Activated naive CD4-positive, alpha-beta T cell treated with anti-CD3 and anti-CD28 coated beads for 36 hours (primary cell): ENCODE measurements at regions of chr2 and their contacts with region 1.

Region 1: GRCh38 chr2:95389245-95390119 is 13.0 kb upstream of the FAHD2A start:
- DNase-seq: peak; percentile 62
- H3K4me3 Mint-ChIP-seq: no peak overlapping the region
- H3K27ac Mint-ChIP-seq: no peak overlapping the region
- H3K4me1 Mint-ChIP-seq: no peaks in the 10 kb centered on the region
- H3K27me3 Mint-ChIP-seq: no peaks in the 10 kb centered on the region

Region 2: DNA sequence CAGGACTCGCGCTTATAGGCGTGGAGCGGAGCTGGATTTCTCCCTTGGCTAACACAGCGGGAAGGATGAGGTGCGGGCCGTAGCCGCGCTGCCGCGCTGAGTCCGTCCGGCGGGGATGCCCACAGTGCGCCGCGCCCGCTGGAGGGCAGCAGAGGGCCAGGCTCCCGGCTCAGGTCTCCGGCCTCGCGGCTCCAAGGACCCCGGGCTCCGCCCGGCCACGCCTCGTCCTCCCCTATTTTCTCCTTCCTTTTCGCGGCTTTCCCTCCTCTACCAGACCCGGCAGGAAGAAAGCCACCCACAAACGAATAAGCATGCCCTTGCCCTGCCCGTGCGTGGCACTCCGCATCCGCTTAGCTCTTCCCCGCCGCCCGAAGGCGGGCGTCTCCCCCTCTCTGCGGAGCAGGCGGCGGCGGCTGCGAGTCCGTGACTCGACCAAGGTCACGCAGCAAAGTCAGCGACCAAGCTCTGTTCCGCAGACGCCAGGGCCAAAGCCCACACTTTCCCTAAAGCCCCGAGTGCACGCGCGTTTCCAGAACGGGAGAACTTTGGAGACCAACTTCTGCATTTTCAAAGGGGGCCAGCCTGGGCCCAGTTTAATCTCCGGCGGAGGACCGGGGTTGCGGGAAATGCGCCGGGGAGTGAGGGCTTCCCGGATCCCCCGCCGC is 43.8 kb before region 1 on chr2:
- CTCF ChIA-PET with region 1: interaction called, 11 read pairs
- intact Hi-C with region 1: no loop called
- DNase-seq: peak; percentile 72
- H3K4me3 Mint-ChIP-seq: peak overlapping the region; percentile 71
- H3K27ac Mint-ChIP-seq: no peak overlapping the region
- H3K4me1 Mint-ChIP-seq: peaks cover 3% of the 10 kb centered on the region
- H3K27me3 Mint-ChIP-seq: peaks cover 42% of the 10 kb centered on the region

Region 3: GRCh38 chr2:95728878-95729596 is 339.6 kb after region 1 on chr2:
- CTCF ChIA-PET with region 1: interaction called, 6 read pairs
- intact Hi-C with region 1: loop called (anchors 1 kb)
- DNase-seq: peak; percentile 69
- H3K4me3 Mint-ChIP-seq: no peak overlapping the region
- H3K27ac Mint-ChIP-seq: no peak overlapping the region
- H3K4me1 Mint-ChIP-seq: no peaks in the 10 kb centered on the region
- H3K27me3 Mint-ChIP-seq: peaks cover 3% of the 10 kb centered on the region